ENCODE measurements at regions of chr1 and their contacts with region 1.

Region 1: GRCh38 chr1:226201029-226201593 is 14.6 kb upstream of the ACBD3 start:
- DNase-seq: no peak
- H3K4me3 Mint-ChIP-seq: no peak overlapping the region
- H3K27ac Mint-ChIP-seq: no peak overlapping the region
- H3K4me1 Mint-ChIP-seq: no peaks in the 10 kb centered on the region
- H3K27me3 Mint-ChIP-seq: peaks cover 14% of the 10 kb centered on the region

Region 2: DNA sequence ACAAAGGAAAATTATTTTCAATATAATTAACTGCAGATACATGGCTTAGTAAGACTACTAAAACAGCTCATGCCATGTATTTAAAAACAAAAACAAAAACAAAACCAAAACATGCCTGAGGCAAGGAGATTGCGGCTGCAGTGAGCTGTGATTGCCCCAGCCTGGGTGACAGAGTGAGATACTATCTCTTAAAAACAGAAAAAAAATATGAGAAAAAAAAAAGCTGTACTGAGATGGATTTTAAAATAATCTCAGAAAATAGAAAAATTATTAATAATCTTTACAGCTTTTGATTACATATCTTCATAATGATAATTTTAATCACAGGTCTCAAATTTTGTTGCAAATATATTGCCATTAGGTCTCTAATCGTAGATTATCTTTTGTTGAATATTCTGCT is 131.8 kb after region 1 on chr1:
- intact Hi-C with region 1: loop called (anchors 2 kb)
- DNase-seq: no peak
- H3K4me3 Mint-ChIP-seq: peak overlapping the region; percentile 11
- H3K27ac Mint-ChIP-seq: no peak overlapping the region
- H3K4me1 Mint-ChIP-seq: peaks cover 7% of the 10 kb centered on the region
- H3K27me3 Mint-ChIP-seq: no peaks in the 10 kb centered on the region

Measured in activated T-helper 2 cell treated with anti-CD3 and anti-CD28 coated beads, Interferon-gamma antibody, Interleukin-2, Interleukin-4, amounts not matched to agents 10 μg/mL and 5 μg/mL and 100 μg/mL, durations not matched to agents 14 hours and 24 hours and 36 hours (primary cell).